Common myeloid progenitor, CD34-positive (primary cell): ENCODE measurements at regions of chr1 and their contacts with region 1.

Region 1: GRCh38 chr1:161098210-161099068 is at the start of gene KLHDC9:
- DNase-seq: peak; percentile 86 to 89 (median 86)
- H3K4me3 ChIP-seq: peak within 1 kb of the TSS; percentile 59 to 91 (median 74)
- H3K27ac ChIP-seq: peak within 1 kb of the TSS in 1 of 2 experiments; percentile 50
- H3K4me1 ChIP-seq: peaks cover 0 to 20% (median 20%) of the 10 kb centered on the region in 4 experiments
- H3K27me3 ChIP-seq: no peaks in the 10 kb centered on the region

Region 2: GRCh38 chr1:161045750-161046571 is 52.5 kb before region 1 on chr1 and contains the start of gene USF1:
- CTCF ChIA-PET with region 1: interaction called, 46 read pairs
- POLR2A ChIA-PET with region 1: interaction called, 3 read pairs
- DNase-seq: peak; percentile 97 to 98 (median 98)
- H3K4me3 ChIP-seq: peak within 1 kb of the TSS; percentile 75 to 97 (median 91)
- H3K27ac ChIP-seq: peak within 1 kb of the TSS; percentile 95 to 97
- H3K4me1 ChIP-seq: peaks cover 8 to 31% (median 20%) of the 10 kb centered on the region in 4 experiments
- H3K27me3 ChIP-seq: no peaks in the 10 kb centered on the region

Region 3: GRCh38 chr1:161111527-161111926 is 13.1 kb after region 1 on chr1:
- CTCF ChIA-PET with region 1: interaction called, 10 read pairs
- POLR2A ChIA-PET with region 1: no interaction called
- DNase-seq: peak in 1 of 3 donors; percentile 22
- H3K4me3 ChIP-seq: peak overlapping the region in 1 of 7 experiments; percentile 2
- H3K27ac ChIP-seq: peak overlapping the region; percentile 12 to 27
- H3K4me1 ChIP-seq: peaks cover 33 to 55% (median 41%) of the 10 kb centered on the region in 4 experiments
- H3K27me3 ChIP-seq: no peaks in the 10 kb centered on the region

Region 4: GRCh38 chr1:161159087-161159912 is 60.9 kb after region 1 on chr1 and contains the start of gene USP21:
- CTCF ChIA-PET with region 1: interaction called, 11 read pairs
- POLR2A ChIA-PET with region 1: no interaction called
- DNase-seq: peak; percentile 87 to 93 (median 92)
- H3K4me3 ChIP-seq: peak within 1 kb of the TSS; percentile 59 to 95 (median 87)
- H3K27ac ChIP-seq: peak within 1 kb of the TSS; percentile 84 to 90
- H3K4me1 ChIP-seq: peaks cover 2 to 34% (median 28%) of the 10 kb centered on the region in 4 experiments
- H3K27me3 ChIP-seq: no peaks in the 10 kb centered on the region